ENCODE measurements at regions of chr17 and their contacts with region 1.

Region 1: GRCh38 chr17:40559954-40560591 is 5.2 kb downstream of the CCR7 start:
- DNase-seq: peak; percentile 97
- H3K4me3 ChIP-seq: peak overlapping the region in 2 of 4 donors; percentile 10 to 26
- H3K27ac ChIP-seq: peak overlapping the region; percentile 34 to 79 (median 58)
- H3K4me1 ChIP-seq: peaks cover 49 to 56% (median 53%) of the 10 kb centered on the region in 4 donors
- H3K27me3 ChIP-seq: peaks cover 0 to 10% (median 0%) of the 10 kb centered on the region in 4 donors
- CTCF ChIP-seq: peak; percentile 97 to 99 (median 99)
- EP300 ChIP-seq: no peak
- POLR2A ChIP-seq: no peak

Region 2: GRCh38 chr17:40362696-40363110 is 197.4 kb before region 1 on chr17:
- intact Hi-C with region 1: loop called (anchors 2 kb)
- DNase-seq: no peak
- H3K4me3 ChIP-seq: peak overlapping the region; percentile 57 to 68 (median 60)
- H3K27ac ChIP-seq: peak overlapping the region in 1 of 4 donors; percentile 39
- H3K4me1 ChIP-seq: peaks cover 10 to 47% (median 30%) of the 10 kb centered on the region in 4 donors
- H3K27me3 ChIP-seq: peaks cover 0 to 8% (median 0%) of the 10 kb centered on the region in 4 donors
- CTCF ChIP-seq: peak; percentile 43 to 57 (median 45)
- EP300 ChIP-seq: no peak
- POLR2A ChIP-seq: no peak

Region 3: GRCh38 chr17:40399185-40399584 is 160.9 kb before region 1 on chr17:
- intact Hi-C with region 1: loop called (anchors 5 kb)
- DNase-seq: no peak
- H3K4me3 ChIP-seq: no peak overlapping the region
- H3K27ac ChIP-seq: no peak overlapping the region
- H3K4me1 ChIP-seq: peaks cover 0 to 2% (median 0%) of the 10 kb centered on the region in 4 donors
- H3K27me3 ChIP-seq: no peaks in the 10 kb centered on the region
- CTCF ChIP-seq: peak; percentile 58 to 65 (median 62)
- EP300 ChIP-seq: no peak
- POLR2A ChIP-seq: no peak

Region 4: DNA sequence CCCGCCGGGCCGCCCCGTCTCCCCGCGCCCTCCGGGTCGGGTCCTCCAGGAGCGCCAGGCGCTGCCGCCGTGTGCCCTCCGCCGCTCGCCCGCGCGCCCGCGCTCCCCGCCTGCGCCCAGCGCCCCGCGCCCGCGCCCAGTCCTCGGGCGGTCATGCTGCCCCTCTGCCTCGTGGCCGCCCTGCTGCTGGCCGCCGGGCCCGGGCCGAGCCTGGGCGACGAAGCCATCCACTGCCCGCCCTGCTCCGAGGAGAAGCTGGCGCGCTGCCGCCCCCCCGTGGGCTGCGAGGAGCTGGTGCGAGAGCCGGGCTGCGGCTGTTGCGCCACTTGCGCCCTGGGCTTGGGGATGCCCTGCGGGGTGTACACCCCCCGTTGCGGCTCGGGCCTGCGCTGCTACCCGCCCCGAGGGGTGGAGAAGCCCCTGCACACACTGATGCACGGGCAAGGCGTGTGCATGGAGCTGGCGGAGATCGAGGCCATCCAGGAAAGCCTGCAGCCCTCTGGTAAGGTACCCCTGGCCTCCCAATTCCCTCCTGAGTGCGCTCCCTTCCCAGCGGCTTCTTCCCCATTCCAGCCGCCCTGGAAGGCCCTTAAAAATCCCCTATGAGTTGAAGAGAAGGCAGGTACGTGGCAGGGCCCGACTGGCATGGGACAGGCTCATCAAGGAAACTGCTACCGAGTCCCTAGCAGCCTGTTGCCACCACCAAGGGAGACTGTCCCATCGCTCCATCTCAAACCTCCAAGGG is 116.3 kb before region 1 on chr17:
- intact Hi-C with region 1: loop called (anchors 2 kb)
- DNase-seq: no peak
- H3K4me3 ChIP-seq: peak overlapping the region; percentile 66 to 88 (median 81)
- H3K27ac ChIP-seq: peak overlapping the region; percentile 88 to 98 (median 93)
- H3K4me1 ChIP-seq: peaks cover 44 to 69% (median 64%) of the 10 kb centered on the region in 4 donors
- H3K27me3 ChIP-seq: no peaks in the 10 kb centered on the region
- CTCF ChIP-seq: peak; percentile 18 to 43 (median 31)
- EP300 ChIP-seq: no peak
- POLR2A ChIP-seq: no peak